CD8-positive, alpha-beta T cell (primary cell): ENCODE measurements at regions of chrX and their contacts with region 1.

Region 1: DNA sequence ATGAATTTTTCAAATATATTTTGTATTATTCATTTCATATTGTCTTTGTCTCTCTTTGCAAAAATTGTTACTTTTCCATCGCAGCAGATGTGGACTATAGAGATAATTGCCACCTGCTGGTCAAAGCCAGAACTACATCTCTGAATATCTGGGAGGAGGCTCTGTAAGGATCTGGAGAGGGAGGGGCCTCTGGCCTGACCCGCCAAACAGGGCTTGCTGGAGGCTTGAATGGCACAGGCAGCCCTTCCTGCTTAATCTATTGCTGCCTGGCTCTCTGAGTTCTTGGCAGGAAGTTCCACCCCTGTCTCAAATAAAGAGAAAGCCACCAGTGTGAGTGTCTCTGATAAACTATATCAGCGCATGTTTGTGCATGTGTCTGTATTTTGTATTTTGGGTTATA is 132.4 kb downstream of the ZMAT1 start:
- DNase-seq: peak; percentile 46 to 89 (median 79)
- ATAC-seq: peak; percentile 100
- H3K4me3 ChIP-seq: no peak overlapping the region
- H3K4me3 Mint-ChIP-seq: peak overlapping the region; percentile 58
- H3K27ac ChIP-seq: no peak overlapping the region
- H3K27ac Mint-ChIP-seq: no peak overlapping the region
- H3K4me1 ChIP-seq: peaks cover 4% of the 10 kb centered on the region
- H3K4me1 Mint-ChIP-seq: peaks cover 8% of the 10 kb centered on the region
- H3K27me3 ChIP-seq: no peaks in the 10 kb centered on the region
- H3K27me3 Mint-ChIP-seq: no peaks in the 10 kb centered on the region
- CTCF ChIP-seq: peak; percentile 73

Region 2: GRCh38 chrX:101595739-101596419 is 203.5 kb before region 1 on chrX:
- CTCF ChIA-PET with region 1: interaction called, 4 read pairs
- POLR2A ChIA-PET with region 1: no interaction called
- intact Hi-C with region 1: loop called (anchors 1 to 5 kb)
- DNase-seq: peak in 5 of 9 experiments; percentile 13 to 76 (median 42)
- ATAC-seq: peak; percentile 72
- H3K4me3 ChIP-seq: no peak overlapping the region
- H3K4me3 Mint-ChIP-seq: no peak overlapping the region
- H3K27ac ChIP-seq: no peak overlapping the region
- H3K27ac Mint-ChIP-seq: no peak overlapping the region
- H3K4me1 ChIP-seq: no peaks in the 10 kb centered on the region
- H3K4me1 Mint-ChIP-seq: no peaks in the 10 kb centered on the region
- H3K27me3 ChIP-seq: no peaks in the 10 kb centered on the region
- H3K27me3 Mint-ChIP-seq: peaks cover 14% of the 10 kb centered on the region
- CTCF ChIP-seq: peak; percentile 65

Region 3: GRCh38 chrX:101617211-101618191 is 181.9 kb before region 1 on chrX and contains the start of gene ARMCX6:
- CTCF ChIA-PET with region 1: no interaction called
- POLR2A ChIA-PET with region 1: no interaction called
- intact Hi-C with region 1: loop called in 1 of 2 experiments (anchors 5 kb)
- DNase-seq: peak; percentile 36 to 90 (median 72)
- ATAC-seq: peak; percentile 80
- H3K4me3 ChIP-seq: peak within 1 kb of the TSS; percentile 62 to 74
- H3K4me3 Mint-ChIP-seq: peak within 1 kb of the TSS; percentile 91
- H3K27ac ChIP-seq: peak within 1 kb of the TSS; percentile 59 to 63
- H3K27ac Mint-ChIP-seq: peak within 1 kb of the TSS; percentile 93
- H3K4me1 ChIP-seq: peaks cover 11% of the 10 kb centered on the region
- H3K4me1 Mint-ChIP-seq: peaks cover 16% of the 10 kb centered on the region
- H3K27me3 ChIP-seq: no peaks in the 10 kb centered on the region
- H3K27me3 Mint-ChIP-seq: no peaks in the 10 kb centered on the region
- CTCF ChIP-seq: no peak
- total RNA-seq, gene ARMCX6: 45.6 to 46.4 TPM

Region 4: DNA sequence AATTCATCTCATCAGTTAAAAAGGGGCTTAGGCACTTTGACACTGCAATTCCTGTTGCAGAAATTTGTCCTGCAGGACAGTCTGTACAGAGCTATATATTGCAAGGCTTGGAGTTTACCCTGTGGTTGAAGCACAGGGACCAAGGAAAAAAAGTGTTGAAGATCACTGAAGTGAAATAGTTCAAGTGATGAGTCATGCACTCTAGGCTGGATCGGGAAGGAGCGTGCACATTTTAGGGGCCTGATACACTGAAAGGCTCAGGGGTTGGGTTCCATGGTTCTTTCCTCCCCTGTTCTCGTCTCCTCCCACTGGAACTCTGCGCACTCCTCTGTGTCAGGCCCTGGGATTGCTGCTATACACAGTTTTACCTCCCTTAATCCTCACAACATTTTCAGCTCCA is 34.8 kb before region 1 on chrX:
- CTCF ChIA-PET with region 1: no interaction called
- POLR2A ChIA-PET with region 1: no interaction called
- intact Hi-C with region 1: loop called in 1 of 2 experiments (anchors 5 kb)
- DNase-seq: no peak
- ATAC-seq: no peak
- H3K4me3 ChIP-seq: no peak overlapping the region
- H3K4me3 Mint-ChIP-seq: no peak overlapping the region
- H3K27ac ChIP-seq: no peak overlapping the region
- H3K27ac Mint-ChIP-seq: no peak overlapping the region
- H3K4me1 ChIP-seq: no peaks in the 10 kb centered on the region
- H3K4me1 Mint-ChIP-seq: no peaks in the 10 kb centered on the region
- H3K27me3 ChIP-seq: no peaks in the 10 kb centered on the region
- H3K27me3 Mint-ChIP-seq: no peaks in the 10 kb centered on the region
- CTCF ChIP-seq: no peak